Ovary (tissue), 10 donors: ENCODE measurements at regions of chr17 and their contacts with region 1.

Region 1: GRCh38 chr17:35540589-35541404 is 3.3 kb upstream of the SLFN12L start:
- DNase-seq: peak in 1 of 5 donors; percentile 25
- H3K4me3 ChIP-seq: peak overlapping the region; percentile 22
- H3K27ac ChIP-seq: no peak overlapping the region
- H3K4me1 ChIP-seq: peaks cover 2% of the 10 kb centered on the region
- H3K27me3 ChIP-seq: no peaks in the 10 kb centered on the region
- CTCF ChIP-seq: no peak
- EP300 ChIP-seq: no peak
- POLR2A ChIP-seq: no peak

Region 2: DNA sequence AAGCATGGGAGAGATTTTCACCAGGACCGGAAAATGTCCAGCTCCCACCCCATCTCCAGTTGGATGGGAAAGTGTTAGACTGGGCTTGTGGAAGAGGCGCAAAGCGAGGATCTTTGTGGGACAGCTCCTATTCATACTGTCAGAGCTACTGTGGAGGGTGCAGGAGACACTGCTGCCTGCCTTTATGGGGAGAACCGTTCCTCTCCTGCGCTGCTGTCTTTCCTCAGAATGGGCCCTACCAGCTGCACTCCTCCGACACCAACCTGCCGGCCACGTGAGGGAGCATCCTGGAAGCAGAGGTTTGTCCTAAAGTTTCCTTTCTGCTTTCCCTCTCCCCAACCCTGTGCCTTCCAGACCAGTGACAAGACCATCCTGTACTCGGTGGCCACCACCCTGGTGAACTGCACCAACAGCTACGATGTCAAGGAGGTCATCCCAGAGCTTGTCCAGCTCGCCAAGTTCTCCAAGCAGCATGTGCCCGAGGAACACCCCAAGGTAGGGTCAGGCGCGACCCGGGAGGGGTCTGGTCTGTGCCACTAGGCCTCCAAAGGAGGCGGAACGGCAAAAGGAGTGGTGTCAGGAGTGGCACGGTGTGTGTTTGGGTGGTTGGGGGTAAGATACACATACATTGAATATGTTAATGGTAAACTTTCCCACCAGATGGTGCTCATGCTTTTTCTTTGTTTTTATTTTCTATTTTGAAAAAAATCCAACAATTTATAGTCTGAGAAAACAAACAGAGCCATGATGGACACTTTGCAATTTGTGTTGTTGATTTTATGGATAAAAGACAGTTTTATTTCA is 369.6 kb before region 1 on chr17:
- intact Hi-C with region 1: loop called in 1 of 4 experiments (anchors 10 kb)
- DNase-seq: no peak
- H3K4me3 ChIP-seq: no peak overlapping the region
- H3K27ac ChIP-seq: no peak overlapping the region
- H3K4me1 ChIP-seq: no peaks in the 10 kb centered on the region
- H3K27me3 ChIP-seq: no peaks in the 10 kb centered on the region
- CTCF ChIP-seq: peak in 1 of 3 donors; percentile 21
- EP300 ChIP-seq: no peak
- POLR2A ChIP-seq: no peak

Region 3: DNA sequence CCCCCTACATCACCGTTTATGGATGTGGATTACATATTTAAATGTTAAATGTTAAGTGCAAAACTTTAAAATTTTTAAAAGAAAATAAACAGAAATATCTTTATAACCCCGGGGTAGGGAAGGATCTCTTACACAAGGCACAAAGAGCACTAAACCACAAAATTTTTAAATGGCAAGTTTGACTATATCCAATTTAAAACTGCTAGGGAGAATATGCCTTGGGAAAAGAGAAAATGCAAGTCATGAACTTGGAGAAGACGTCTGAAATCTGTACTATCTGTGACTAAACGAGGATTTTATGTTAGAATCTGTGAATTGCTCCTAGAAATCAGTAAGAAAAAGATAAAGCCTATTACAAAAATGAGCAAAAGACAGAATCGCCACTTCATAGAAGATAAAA is 63.5 kb before region 1 on chr17:
- intact Hi-C with region 1: no loop called
- DNase-seq: no peak
- H3K4me3 ChIP-seq: no peak overlapping the region
- H3K27ac ChIP-seq: no peak overlapping the region
- H3K4me1 ChIP-seq: no peaks in the 10 kb centered on the region
- H3K27me3 ChIP-seq: no peaks in the 10 kb centered on the region
- CTCF ChIP-seq: no peak
- EP300 ChIP-seq: no peak
- POLR2A ChIP-seq: no peak

Region 4: DNA sequence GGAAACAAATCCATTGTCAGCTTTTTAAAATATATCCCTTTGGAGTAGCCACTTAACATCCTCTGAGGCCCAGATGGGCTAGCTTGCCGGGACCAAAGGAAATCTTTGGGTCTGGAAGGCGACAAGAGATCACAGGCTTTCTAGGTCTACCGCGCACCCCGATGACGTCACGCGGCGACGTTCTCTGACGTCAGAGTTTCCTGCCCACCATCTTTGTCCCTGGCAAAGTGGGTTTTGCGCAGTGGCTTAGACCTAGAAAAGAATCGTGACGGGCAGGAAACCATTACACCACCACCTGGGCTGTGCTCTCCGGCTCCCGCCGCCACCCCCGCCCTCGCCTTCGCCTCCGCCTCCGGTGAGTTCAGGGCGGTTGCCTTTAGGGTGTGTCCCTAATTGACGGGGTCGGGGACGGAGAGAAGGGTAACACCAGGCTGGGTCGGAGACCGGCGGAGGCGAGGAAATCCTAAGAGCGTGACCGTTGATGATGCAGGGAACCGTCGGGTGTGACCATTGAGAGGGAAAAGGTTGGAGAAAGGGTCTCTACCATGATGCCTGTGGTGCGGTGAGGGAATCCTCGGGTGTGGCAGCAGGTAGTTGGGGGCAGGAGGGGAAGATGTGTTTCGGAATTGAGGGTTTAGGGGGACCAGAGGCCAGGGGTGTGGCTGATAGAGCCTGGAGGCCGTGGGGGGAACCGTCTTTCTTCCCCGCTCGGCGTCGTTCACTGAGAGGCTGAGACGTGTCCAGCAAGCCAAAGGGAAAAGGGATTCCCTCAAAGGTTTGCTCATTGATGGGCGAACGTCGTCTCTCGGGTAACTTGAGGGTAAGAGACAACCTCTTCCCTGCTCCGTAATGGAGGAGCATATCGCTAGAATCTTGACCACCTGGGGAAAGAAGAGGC is 46.5 kb after region 1 on chr17 and contains the start of gene AP2B1:
- intact Hi-C with region 1: no loop called
- DNase-seq: peak; percentile 87 to 98 (median 94)
- H3K4me3 ChIP-seq: peak within 1 kb of the TSS; percentile 93
- H3K27ac ChIP-seq: peak within 1 kb of the TSS; percentile 3 to 58
- H3K4me1 ChIP-seq: peaks cover 5% of the 10 kb centered on the region
- H3K27me3 ChIP-seq: no peaks in the 10 kb centered on the region
- CTCF ChIP-seq: peak in 2 of 3 donors; percentile 31 to 41
- EP300 ChIP-seq: peak; percentile 45
- POLR2A ChIP-seq: peak; percentile 78
- total RNA-seq, gene AP2B1: 48.3 to 170 (median 139) TPM

Region 5: GRCh38 chr17:35849469-35850348 is 308.9 kb after region 1 on chr17:
- intact Hi-C with region 1: no loop called
- DNase-seq: peak in 1 of 5 donors; percentile 27
- H3K4me3 ChIP-seq: no peak overlapping the region
- H3K27ac ChIP-seq: no peak overlapping the region
- H3K4me1 ChIP-seq: no peaks in the 10 kb centered on the region
- H3K27me3 ChIP-seq: no peaks in the 10 kb centered on the region
- CTCF ChIP-seq: peak in 1 of 3 donors; percentile 19
- EP300 ChIP-seq: no peak
- POLR2A ChIP-seq: no peak